Mammary epithelial cell (primary cell): ENCODE measurements at regions of chr9 and their contacts with region 1.

Region 1: GRCh38 chr9:113275157-113276131 is at the starts of genes CDC26 and PRPF4:
- DNase-seq: peak; percentile 98
- H3K4me3 ChIP-seq: peak within 1 kb of the TSS; percentile 63 to 89 (median 82)
- H3K27ac ChIP-seq: peak within 1 kb of the TSS; percentile 91
- H3K4me1 ChIP-seq: peaks cover 15% of the 10 kb centered on the region
- H3K27me3 ChIP-seq: no peaks in the 10 kb centered on the region
- CTCF ChIP-seq: no peak
- total RNA-seq, gene CDC26: 16.2 to 26.4 TPM
- total RNA-seq, gene PRPF4: 24.2 to 38.1 TPM

Region 2: GRCh38 chr9:112921549-112921948 is 353.9 kb before region 1 on chr9:
- CTCF ChIA-PET with region 1: no interaction called
- dilution Hi-C with region 1: no loop called
- in situ Hi-C with region 1: no loop called
- intact Hi-C with region 1: loop called (anchors 10 kb)
- DNase-seq: peak; percentile 52
- H3K4me3 ChIP-seq: no peak overlapping the region
- H3K27ac ChIP-seq: no peak overlapping the region
- H3K4me1 ChIP-seq: peaks cover 12% of the 10 kb centered on the region
- H3K27me3 ChIP-seq: no peaks in the 10 kb centered on the region
- CTCF ChIP-seq: peak; percentile 64 to 84

Region 3: GRCh38 chr9:113150670-113151611 is 124.5 kb before region 1 on chr9 and contains the start of gene SLC31A2:
- CTCF ChIA-PET with region 1: no interaction called
- dilution Hi-C with region 1: no loop called
- in situ Hi-C with region 1: no loop called
- intact Hi-C with region 1: loop called (anchors 5 kb)
- DNase-seq: peak; percentile 84
- H3K4me3 ChIP-seq: peak within 1 kb of the TSS; percentile 82 to 93 (median 92)
- H3K27ac ChIP-seq: peak within 1 kb of the TSS; percentile 89
- H3K4me1 ChIP-seq: peaks cover 44% of the 10 kb centered on the region
- H3K27me3 ChIP-seq: no peaks in the 10 kb centered on the region
- CTCF ChIP-seq: peak in 1 of 2 donors; percentile 51
- total RNA-seq, gene SLC31A2: 68.5 to 80.7 TPM

Region 4: GRCh38 chr9:113196967-113197366 is 78.5 kb before region 1 on chr9:
- CTCF ChIA-PET with region 1: no interaction called
- dilution Hi-C with region 1: no loop called
- in situ Hi-C with region 1: no loop called
- intact Hi-C with region 1: no loop called
- DNase-seq: no peak
- H3K4me3 ChIP-seq: no peak overlapping the region
- H3K27ac ChIP-seq: no peak overlapping the region
- H3K4me1 ChIP-seq: no peaks in the 10 kb centered on the region
- H3K27me3 ChIP-seq: no peaks in the 10 kb centered on the region
- CTCF ChIP-seq: no peak

Region 5: GRCh38 chr9:113221003-113221799 is 54.2 kb before region 1 on chr9 and contains the starts of genes FKBP15 and SLC31A1:
- CTCF ChIA-PET with region 1: interaction called, 3 read pairs
- dilution Hi-C with region 1: loop called (anchors 5 kb)
- in situ Hi-C with region 1: no loop called
- intact Hi-C with region 1: loop called (anchors 2 kb)
- DNase-seq: peak; percentile 99
- H3K4me3 ChIP-seq: peak within 1 kb of the TSS; percentile 64 to 94 (median 67)
- H3K27ac ChIP-seq: peak within 1 kb of the TSS; percentile 88
- H3K4me1 ChIP-seq: peaks cover 22% of the 10 kb centered on the region
- H3K27me3 ChIP-seq: no peaks in the 10 kb centered on the region
- CTCF ChIP-seq: no peak
- total RNA-seq, gene FKBP15: 20.7 to 29.5 TPM
- total RNA-seq, gene SLC31A1: 31.5 to 43.2 TPM

Region 6: GRCh38 chr9:113340017-113340699 is 64.7 kb after region 1 on chr9 and contains the start of gene WDR31:
- CTCF ChIA-PET with region 1: no interaction called
- dilution Hi-C with region 1: no loop called
- in situ Hi-C with region 1: no loop called
- intact Hi-C with region 1: loop called (anchors 2 kb)
- DNase-seq: peak; percentile 86
- H3K4me3 ChIP-seq: peak within 1 kb of the TSS; percentile 93 to 99 (median 97)
- H3K27ac ChIP-seq: peak within 1 kb of the TSS; percentile 63
- H3K4me1 ChIP-seq: peaks cover 19% of the 10 kb centered on the region
- H3K27me3 ChIP-seq: no peaks in the 10 kb centered on the region
- CTCF ChIP-seq: no peak
- total RNA-seq, gene WDR31: 2.0 to 2.3 TPM

Region 7: GRCh38 chr9:113410207-113410864 is 134.9 kb after region 1 on chr9 and contains the starts of genes C9orf43 and POLE3:
- CTCF ChIA-PET with region 1: interaction called, 18 read pairs
- dilution Hi-C with region 1: no loop called
- in situ Hi-C with region 1: no loop called
- intact Hi-C with region 1: loop called (anchors 1 kb)
- DNase-seq: peak; percentile 96
- H3K4me3 ChIP-seq: peak within 1 kb of the TSS; percentile 89 to 98 (median 97)
- H3K27ac ChIP-seq: peak within 1 kb of the TSS; percentile 96
- H3K4me1 ChIP-seq: peaks cover 13% of the 10 kb centered on the region
- H3K27me3 ChIP-seq: no peaks in the 10 kb centered on the region
- CTCF ChIP-seq: no peak
- total RNA-seq, gene C9orf43: 0.56 to 0.83 TPM
- total RNA-seq, gene POLE3: 42.8 to 50.2 TPM